ENCODE measurements at regions of chr7 and their contacts with region 1.

Region 1: DNA sequence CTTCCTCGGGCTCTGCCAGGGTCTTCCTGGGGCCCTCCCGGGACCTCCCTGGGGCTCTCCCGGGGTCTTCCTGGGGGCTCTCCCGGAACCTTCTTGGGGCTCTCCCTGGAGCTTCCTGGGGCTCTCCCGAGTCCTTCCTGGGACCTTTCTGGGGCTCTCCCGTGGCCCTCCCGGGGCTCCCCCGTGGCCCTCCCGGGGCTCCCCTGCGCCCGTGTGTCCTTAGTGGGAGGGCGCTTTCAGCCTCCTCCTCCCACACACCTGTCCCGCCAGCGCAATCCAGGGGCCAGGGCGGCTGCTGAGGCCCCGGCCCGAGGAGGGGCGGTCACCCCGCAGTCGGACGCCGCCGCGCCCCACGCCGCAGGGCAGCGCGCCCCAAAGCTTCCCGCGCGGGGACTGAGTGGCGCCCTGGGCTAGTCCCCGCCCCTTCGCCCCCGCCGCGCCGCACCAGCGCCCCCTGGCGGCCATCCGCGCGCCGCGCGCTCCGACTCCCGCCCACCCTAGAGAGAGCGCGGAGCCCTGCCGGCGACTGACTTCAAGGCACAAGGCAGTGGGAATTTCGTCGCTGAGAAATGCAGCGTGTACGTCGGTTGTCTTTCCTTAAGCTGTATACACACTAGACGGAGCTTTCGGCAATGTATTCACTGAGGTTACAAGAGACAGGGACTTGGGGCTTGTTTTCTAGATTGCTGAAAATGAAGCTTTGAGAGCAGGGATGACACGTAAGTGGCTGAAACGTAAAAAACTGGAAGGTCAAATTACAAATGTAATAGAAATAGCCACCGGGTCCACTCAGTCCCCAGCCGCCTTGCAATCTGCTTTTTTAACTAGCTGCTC is 47.1 kb downstream of the INSIG1 start:
- DNase-seq: peak; percentile 19 to 91
- H3K4me3 ChIP-seq: peak overlapping the region; percentile 22 to 66 (median 34)
- H3K27ac ChIP-seq: no peak overlapping the region
- H3K4me1 ChIP-seq: peaks cover 0 to 8% (median 2%) of the 10 kb centered on the region in 4 experiments; a peak in 3 of 7 replicates
- H3K27me3 ChIP-seq: peaks cover 4 to 12% (median 6%) of the 10 kb centered on the region in 4 experiments; a peak in 6 of 7 replicates
- CTCF ChIP-seq: peak; percentile 80 to 96 (median 89)
- EP300 ChIP-seq: no peak
- POLR2A ChIP-seq: no peak
- RAD21 ChIP-seq: peak; percentile 68 to 89

Region 2: GRCh38 chr7:155333346-155334234 is 11.2 kb before region 1 on chr7:
- CTCF ChIA-PET with region 1: interaction called, 16 read pairs
- POLR2A ChIA-PET with region 1: no interaction called
- DNase-seq: no peak
- H3K4me3 ChIP-seq: no peak overlapping the region
- H3K27ac ChIP-seq: no peak overlapping the region
- H3K4me1 ChIP-seq: peaks cover 0 to 2% (median under 1%) of the 10 kb centered on the region in 4 experiments; a peak in 1 of 7 replicates
- H3K27me3 ChIP-seq: no peaks in the 10 kb centered on the region
- CTCF ChIP-seq: no peak
- EP300 ChIP-seq: no peak
- POLR2A ChIP-seq: no peak
- RAD21 ChIP-seq: no peak

Region 3: GRCh38 chr7:155357573-155358041 is 12.8 kb after region 1 on chr7:
- CTCF ChIA-PET with region 1: interaction called, 12 read pairs
- POLR2A ChIA-PET with region 1: no interaction called
- DNase-seq: no peak
- H3K4me3 ChIP-seq: no peak overlapping the region
- H3K27ac ChIP-seq: no peak overlapping the region
- H3K4me1 ChIP-seq: no peaks in the 10 kb centered on the region; a peak in 1 of 7 replicates
- H3K27me3 ChIP-seq: no peaks in the 10 kb centered on the region; a peak in 2 of 7 replicates
- CTCF ChIP-seq: no peak
- EP300 ChIP-seq: no peak
- POLR2A ChIP-seq: no peak
- RAD21 ChIP-seq: no peak